ENCODE measurements at regions of chr17 and their contacts with region 1.

Region 1: GRCh38 chr17:45021607-45022287 is 29.7 kb downstream of the DCAKD start:
- DNase-seq: peak; percentile 67 to 75 (median 74)
- ATAC-seq: peak; percentile 80
- H3K4me3 ChIP-seq: no peak overlapping the region
- H3K27ac ChIP-seq: peak overlapping the region; percentile 20 to 84 (median 78)
- H3K4me1 ChIP-seq: peaks cover 50% of the 10 kb centered on the region
- H3K27me3 ChIP-seq: no peaks in the 10 kb centered on the region
- CTCF ChIP-seq: peak; percentile 51 to 97 (median 95)
- POLR2A ChIP-seq: peak; percentile 47 to 57 (median 54)

Region 2: GRCh38 chr17:44804302-44805089 is 217.3 kb before region 1 on chr17:
- intact Hi-C with region 1: no loop called
- DNase-seq: no peak
- ATAC-seq: no peak
- H3K4me3 ChIP-seq: no peak overlapping the region
- H3K27ac ChIP-seq: no peak overlapping the region
- H3K4me1 ChIP-seq: no peaks in the 10 kb centered on the region
- H3K27me3 ChIP-seq: no peaks in the 10 kb centered on the region
- CTCF ChIP-seq: no peak
- POLR2A ChIP-seq: no peak

Region 3: GRCh38 chr17:44919885-44920564 is 101.7 kb before region 1 on chr17:
- intact Hi-C with region 1: loop called (anchors 2 kb)
- DNase-seq: peak; percentile 82 to 88 (median 86)
- ATAC-seq: peak; percentile 84
- H3K4me3 ChIP-seq: no peak overlapping the region
- H3K27ac ChIP-seq: no peak overlapping the region
- H3K4me1 ChIP-seq: peaks cover 24% of the 10 kb centered on the region
- H3K27me3 ChIP-seq: no peaks in the 10 kb centered on the region
- CTCF ChIP-seq: peak; percentile 78 to 93 (median 90)
- POLR2A ChIP-seq: no peak